ENCODE measurements at regions of chr16 and their contacts with region 1.

Region 1: GRCh38 chr16:57648590-57649442 is 19.3 kb upstream of the ADGRG3 start:
- DNase-seq: peak; percentile 94
- H3K4me3 Mint-ChIP-seq: no peak overlapping the region
- H3K27ac Mint-ChIP-seq: no peak overlapping the region
- H3K4me1 Mint-ChIP-seq: peaks cover 21% of the 10 kb centered on the region
- H3K27me3 Mint-ChIP-seq: no peaks in the 10 kb centered on the region

Region 2: GRCh38 chr16:57413301-57413730 is 235.5 kb before region 1 on chr16:
- CTCF ChIA-PET with region 1: interaction called, 3 read pairs
- POLR2A ChIA-PET with region 1: no interaction called
- intact Hi-C with region 1: loop called (anchors 5 kb)
- DNase-seq: no peak
- H3K4me3 Mint-ChIP-seq: no peak overlapping the region
- H3K27ac Mint-ChIP-seq: no peak overlapping the region
- H3K4me1 Mint-ChIP-seq: peaks cover 10% of the 10 kb centered on the region
- H3K27me3 Mint-ChIP-seq: no peaks in the 10 kb centered on the region

Region 3: DNA sequence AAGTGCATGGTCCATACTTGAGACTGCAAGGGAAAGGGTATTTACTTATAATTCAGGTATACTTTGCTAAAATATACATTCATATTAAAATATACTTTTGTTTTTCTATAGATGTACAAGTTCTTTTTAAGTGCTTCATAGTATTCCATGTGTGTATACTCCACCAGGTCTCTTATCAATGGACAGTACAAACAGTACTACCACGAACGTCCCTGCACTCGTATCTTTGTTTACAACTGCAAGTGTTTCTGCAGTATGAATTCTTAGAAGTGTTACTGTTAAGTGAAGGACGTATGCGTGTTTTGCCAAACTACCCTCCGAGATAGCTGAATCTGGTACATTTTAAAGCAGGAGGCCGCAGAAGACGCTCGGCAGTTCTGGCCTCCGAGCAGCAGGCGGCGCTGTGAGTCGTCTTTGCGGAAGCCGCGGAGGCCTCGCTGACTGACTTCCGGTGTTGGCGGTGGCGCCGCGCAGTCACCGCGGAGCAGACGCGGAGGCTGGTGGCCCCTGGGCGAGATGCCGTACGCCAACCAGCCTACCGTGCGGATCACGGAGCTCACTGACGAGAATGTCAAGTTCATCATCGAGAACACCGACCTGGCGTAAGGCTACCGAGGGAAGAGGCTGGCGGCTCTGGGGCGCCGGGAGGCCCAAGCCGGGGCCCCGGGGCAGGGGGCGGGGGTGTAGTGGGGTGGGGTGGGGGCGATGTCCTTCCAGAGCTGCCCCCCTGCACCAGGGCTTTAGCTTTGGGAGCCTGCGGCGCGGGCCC is 186.4 kb before region 1 on chr16 and contains the start of gene POLR2C:
- CTCF ChIA-PET with region 1: no interaction called
- POLR2A ChIA-PET with region 1: no interaction called
- intact Hi-C with region 1: no loop called
- DNase-seq: peak; percentile 95
- H3K4me3 Mint-ChIP-seq: peak within 1 kb of the TSS; percentile 100
- H3K27ac Mint-ChIP-seq: peak within 1 kb of the TSS; percentile 98
- H3K4me1 Mint-ChIP-seq: peaks cover 34% of the 10 kb centered on the region
- H3K27me3 Mint-ChIP-seq: no peaks in the 10 kb centered on the region
- total RNA-seq, gene POLR2C: 52.5 to 57.0 TPM

Region 4: GRCh38 chr16:57591086-57591869 is 57.5 kb before region 1 on chr16:
- CTCF ChIA-PET with region 1: interaction called, 250 read pairs
- POLR2A ChIA-PET with region 1: interaction called, 6 read pairs
- intact Hi-C with region 1: loop called (anchors 1 kb)
- DNase-seq: peak; percentile 87
- H3K4me3 Mint-ChIP-seq: peak overlapping the region; percentile 53
- H3K27ac Mint-ChIP-seq: peak overlapping the region; percentile 93
- H3K4me1 Mint-ChIP-seq: peaks cover 34% of the 10 kb centered on the region
- H3K27me3 Mint-ChIP-seq: no peaks in the 10 kb centered on the region

Region 5: DNA sequence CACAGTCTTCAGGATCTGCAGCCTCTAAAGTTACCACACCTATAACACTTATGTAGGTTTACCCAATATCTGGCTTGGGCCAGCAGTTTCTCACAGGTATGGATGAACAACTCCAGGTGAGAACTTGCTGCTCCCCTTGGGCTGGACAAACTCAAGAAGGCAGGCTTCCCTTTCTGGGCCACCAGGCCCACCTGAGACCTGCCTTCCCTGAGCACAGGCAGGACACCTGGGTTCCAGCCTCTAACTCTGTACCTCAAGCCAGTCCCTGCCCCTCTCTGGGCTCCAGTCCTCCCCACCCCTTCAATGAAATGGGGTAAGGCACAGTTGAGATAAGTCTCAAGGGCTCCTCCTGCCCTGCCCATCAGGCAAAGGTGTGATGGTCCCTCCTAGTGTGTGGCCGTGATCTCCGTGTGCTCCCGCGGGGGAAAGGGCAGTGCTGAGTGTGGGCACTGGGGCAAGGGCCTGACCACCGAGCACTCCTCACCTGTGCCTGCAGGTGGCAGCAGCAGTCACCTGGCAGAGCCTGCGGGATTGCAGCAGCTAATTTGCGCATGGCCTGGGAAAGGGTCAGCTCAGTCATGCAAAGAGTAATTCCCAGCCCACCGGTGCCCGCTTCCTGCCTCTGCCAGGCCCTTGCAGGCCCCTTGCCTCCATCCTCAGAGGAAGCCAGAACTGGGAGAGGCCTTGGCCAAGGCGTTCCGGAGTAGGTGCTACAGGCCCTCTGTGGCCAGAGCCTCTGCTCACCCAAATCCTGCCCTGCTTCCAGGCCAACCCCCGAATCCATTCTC is 48.6 kb before region 1 on chr16:
- CTCF ChIA-PET with region 1: interaction called, 250 read pairs
- POLR2A ChIA-PET with region 1: no interaction called
- intact Hi-C with region 1: loop called (anchors 1 kb)
- DNase-seq: peak; percentile 71
- H3K4me3 Mint-ChIP-seq: no peak overlapping the region
- H3K27ac Mint-ChIP-seq: no peak overlapping the region
- H3K4me1 Mint-ChIP-seq: peaks cover 31% of the 10 kb centered on the region
- H3K27me3 Mint-ChIP-seq: no peaks in the 10 kb centered on the region

Region 6: GRCh38 chr16:57609541-57610401 is 39.0 kb before region 1 on chr16:
- CTCF ChIA-PET with region 1: interaction called, 250 read pairs
- POLR2A ChIA-PET with region 1: no interaction called
- intact Hi-C with region 1: loop called (anchors 1 kb)
- DNase-seq: peak; percentile 92
- H3K4me3 Mint-ChIP-seq: peak overlapping the region; percentile 48
- H3K27ac Mint-ChIP-seq: peak overlapping the region; percentile 94
- H3K4me1 Mint-ChIP-seq: peaks cover 51% of the 10 kb centered on the region
- H3K27me3 Mint-ChIP-seq: no peaks in the 10 kb centered on the region

Region 7: DNA sequence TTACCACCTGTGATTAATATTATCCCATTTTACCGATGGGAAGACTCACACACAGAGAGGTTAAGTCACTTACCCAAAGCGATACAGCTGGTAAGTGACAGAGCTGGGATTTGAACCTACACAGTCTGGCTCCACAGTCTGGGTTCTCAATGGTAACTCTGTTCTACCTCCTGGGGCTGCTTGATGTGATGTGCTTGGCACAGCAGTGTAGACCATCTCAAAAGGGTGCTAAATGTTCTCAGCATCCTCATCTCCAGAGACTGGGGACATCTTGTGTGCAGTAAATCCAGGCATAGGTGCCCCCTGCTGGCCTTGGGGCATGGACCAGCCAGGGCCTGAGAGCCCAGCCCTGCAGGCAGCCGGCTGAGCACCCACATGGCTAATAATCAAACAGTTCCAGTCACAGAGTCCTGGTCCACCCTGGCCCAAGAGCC is 71.3 kb after region 1 on chr16:
- CTCF ChIA-PET with region 1: interaction called, 3 read pairs
- POLR2A ChIA-PET with region 1: no interaction called
- intact Hi-C with region 1: loop called (anchors 1 kb)
- DNase-seq: peak; percentile 68
- H3K4me3 Mint-ChIP-seq: no peak overlapping the region
- H3K27ac Mint-ChIP-seq: no peak overlapping the region
- H3K4me1 Mint-ChIP-seq: no peaks in the 10 kb centered on the region
- H3K27me3 Mint-ChIP-seq: peaks cover 6% of the 10 kb centered on the region

Region 8: DNA sequence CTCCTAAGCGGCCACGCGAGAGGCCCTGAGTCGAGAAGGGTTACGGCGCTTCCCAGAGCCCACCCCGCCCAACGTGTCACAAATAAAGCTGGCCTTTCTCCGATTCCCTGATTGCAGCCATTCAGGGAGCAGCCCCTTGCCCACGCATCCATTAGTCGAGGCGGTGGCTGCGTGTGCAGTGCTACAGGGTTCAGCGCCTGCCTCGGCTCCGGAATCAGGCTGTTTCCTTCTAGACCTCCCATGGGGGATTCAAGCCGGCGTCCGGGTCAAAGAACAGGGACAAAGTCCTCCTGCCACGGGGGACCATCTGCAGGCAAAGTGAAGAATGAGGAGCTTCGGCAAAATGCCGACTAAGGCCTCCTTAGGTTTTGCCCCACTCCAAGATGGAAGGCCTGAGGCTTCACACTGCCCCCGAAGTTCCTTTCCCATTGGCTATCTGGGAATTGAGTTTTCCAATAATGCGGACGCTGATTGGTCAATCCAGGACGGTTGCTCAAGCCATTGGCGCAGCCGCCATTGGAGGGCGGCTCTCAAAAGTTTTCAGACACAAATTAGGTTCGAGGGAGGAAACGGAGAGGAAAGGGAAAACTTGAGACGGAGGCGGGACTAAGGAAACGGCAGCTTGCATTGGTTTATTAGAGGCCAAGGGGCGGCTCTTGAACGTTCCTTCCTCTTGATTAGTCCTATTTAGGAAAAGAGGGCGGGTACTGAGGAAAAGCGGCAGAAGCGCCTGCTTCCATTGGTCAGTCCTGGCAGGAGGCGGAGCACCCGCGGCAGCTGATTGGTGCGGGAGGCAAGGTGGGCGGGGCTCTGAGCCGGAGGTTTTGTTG is 86.3 kb after region 1 on chr16:
- CTCF ChIA-PET with region 1: interaction called, 11 read pairs
- POLR2A ChIA-PET with region 1: no interaction called
- intact Hi-C with region 1: loop called (anchors 2 kb)
- DNase-seq: peak; percentile 98
- H3K4me3 Mint-ChIP-seq: peak overlapping the region; percentile 99
- H3K27ac Mint-ChIP-seq: peak overlapping the region; percentile 87
- H3K4me1 Mint-ChIP-seq: peaks cover 27% of the 10 kb centered on the region
- H3K27me3 Mint-ChIP-seq: peaks cover 2% of the 10 kb centered on the region